GM12878 (cell line): ENCODE measurements at regions of chr16 and their contacts with region 1.

Region 1: DNA sequence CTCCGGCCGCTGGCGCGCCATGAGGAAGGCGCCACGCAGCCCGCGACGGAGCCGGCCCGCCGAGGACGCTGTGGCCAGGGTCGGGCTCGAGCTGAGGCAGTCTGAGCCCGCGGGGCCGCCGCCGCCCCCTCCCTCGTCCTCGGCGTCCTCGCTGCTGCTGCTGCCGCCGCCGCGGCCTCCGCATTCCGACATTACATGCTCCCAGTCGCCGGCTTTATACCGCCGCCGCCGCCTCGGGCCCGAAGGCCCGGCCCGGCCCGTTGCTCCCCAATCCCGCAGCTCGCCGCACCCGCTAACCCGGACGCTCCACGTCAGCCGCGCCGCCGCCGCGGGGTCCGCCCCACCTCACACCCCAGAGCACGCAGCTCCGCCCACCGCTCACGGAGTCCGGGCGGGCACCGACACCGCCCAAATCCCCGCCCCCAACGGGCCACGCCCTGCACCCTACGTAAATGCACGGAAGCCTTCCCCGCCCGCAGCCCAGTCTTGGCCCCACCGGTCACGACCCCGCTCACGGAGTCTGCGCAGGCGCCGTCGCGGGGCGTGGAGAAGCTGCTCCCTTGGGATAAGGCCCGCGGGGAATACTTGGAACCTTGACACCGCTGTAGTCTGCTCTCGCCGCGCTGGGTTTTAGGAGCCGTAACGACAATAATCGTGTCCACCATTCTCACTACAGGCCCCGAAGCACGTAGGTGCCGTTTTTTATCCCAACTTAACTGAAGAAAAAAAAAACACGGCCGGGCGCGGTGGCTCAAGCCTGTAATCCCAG is at the start of gene TXNDC11:
- DNase-seq: peak; percentile 93
- ATAC-seq: peak; percentile 88
- H3K4me3 ChIP-seq: peak within 1 kb of the TSS; percentile 83
- H3K27ac ChIP-seq: peak within 1 kb of the TSS; percentile 75
- H3K4me1 ChIP-seq: peaks cover 13% of the 10 kb centered on the region
- H3K27me3 ChIP-seq: no peaks in the 10 kb centered on the region
- CTCF ChIP-seq: no peak
- EP300 ChIP-seq: peak; percentile 18 to 38; a peak in 1 of 4 replicates
- POLR2A ChIP-seq: peak; percentile 98
- RAD21 ChIP-seq: no peak
- polyA plus RNA-seq, gene TXNDC11: 1.7 to 7.3 TPM

Region 2: GRCh38 chr16:11315510-11315909 is 427.2 kb before region 1 on chr16:
- CTCF ChIA-PET with region 1: no interaction called
- POLR2A ChIA-PET with region 1: no interaction called
- RAD21 ChIA-PET with region 1: no interaction called
- SMC1A ChIA-PET with region 1: no interaction called
- in situ Hi-C with region 1: no loop called
- intact Hi-C with region 1: no loop called
- DNase-seq: no peak
- ATAC-seq: no peak
- H3K4me3 ChIP-seq: no peak overlapping the region
- H3K27ac ChIP-seq: no peak overlapping the region
- H3K4me1 ChIP-seq: peaks cover 31% of the 10 kb centered on the region
- H3K27me3 ChIP-seq: no peaks in the 10 kb centered on the region; a peak in 1 of 4 replicates
- CTCF ChIP-seq: no peak
- EP300 ChIP-seq: no peak
- POLR2A ChIP-seq: no peak
- RAD21 ChIP-seq: no peak

Region 3: DNA sequence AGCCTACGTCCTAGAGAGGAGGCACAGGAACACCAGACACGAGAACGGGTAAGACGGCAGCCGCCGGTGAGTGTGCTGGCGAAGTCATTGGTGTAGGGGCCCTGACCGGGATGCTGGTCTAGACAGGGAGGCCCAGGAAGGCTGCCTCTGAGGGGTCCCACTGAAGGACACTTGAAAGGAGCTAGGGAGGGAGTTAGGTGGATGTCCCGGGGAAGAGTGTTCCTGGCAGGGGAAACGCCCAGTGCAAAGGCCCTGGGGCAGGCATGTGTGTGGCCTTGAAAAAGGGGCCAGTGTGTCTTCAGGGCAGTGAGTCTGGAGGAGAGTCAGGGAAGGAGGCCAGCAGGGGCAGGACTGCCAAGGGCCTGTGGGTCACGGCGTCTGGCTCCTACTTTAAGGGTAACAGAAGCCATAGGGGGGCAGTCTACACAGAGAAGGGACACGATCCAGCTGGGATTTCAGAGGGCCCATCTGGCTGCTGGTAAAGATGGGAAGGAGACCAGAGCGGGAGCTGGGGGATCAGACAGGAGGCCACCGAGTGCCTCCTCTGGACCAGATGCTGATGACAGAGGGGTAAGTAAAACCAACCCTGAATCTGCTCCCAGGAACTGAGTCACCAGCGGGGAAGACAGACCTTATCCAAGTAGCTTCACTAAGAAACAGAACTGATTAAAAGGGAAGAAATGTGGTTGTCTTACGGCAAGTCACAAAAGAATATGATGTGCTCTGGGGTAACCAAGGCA is 271.9 kb before region 1 on chr16:
- CTCF ChIA-PET with region 1: no interaction called
- POLR2A ChIA-PET with region 1: no interaction called
- RAD21 ChIA-PET with region 1: no interaction called
- SMC1A ChIA-PET with region 1: no interaction called
- in situ Hi-C with region 1: no loop called
- intact Hi-C with region 1: no loop called
- DNase-seq: no peak
- ATAC-seq: no peak
- H3K4me3 ChIP-seq: no peak overlapping the region
- H3K27ac ChIP-seq: no peak overlapping the region
- H3K4me1 ChIP-seq: no peaks in the 10 kb centered on the region
- H3K27me3 ChIP-seq: no peaks in the 10 kb centered on the region
- CTCF ChIP-seq: no peak
- EP300 ChIP-seq: no peak
- POLR2A ChIP-seq: no peak
- RAD21 ChIP-seq: no peak

Region 4: DNA sequence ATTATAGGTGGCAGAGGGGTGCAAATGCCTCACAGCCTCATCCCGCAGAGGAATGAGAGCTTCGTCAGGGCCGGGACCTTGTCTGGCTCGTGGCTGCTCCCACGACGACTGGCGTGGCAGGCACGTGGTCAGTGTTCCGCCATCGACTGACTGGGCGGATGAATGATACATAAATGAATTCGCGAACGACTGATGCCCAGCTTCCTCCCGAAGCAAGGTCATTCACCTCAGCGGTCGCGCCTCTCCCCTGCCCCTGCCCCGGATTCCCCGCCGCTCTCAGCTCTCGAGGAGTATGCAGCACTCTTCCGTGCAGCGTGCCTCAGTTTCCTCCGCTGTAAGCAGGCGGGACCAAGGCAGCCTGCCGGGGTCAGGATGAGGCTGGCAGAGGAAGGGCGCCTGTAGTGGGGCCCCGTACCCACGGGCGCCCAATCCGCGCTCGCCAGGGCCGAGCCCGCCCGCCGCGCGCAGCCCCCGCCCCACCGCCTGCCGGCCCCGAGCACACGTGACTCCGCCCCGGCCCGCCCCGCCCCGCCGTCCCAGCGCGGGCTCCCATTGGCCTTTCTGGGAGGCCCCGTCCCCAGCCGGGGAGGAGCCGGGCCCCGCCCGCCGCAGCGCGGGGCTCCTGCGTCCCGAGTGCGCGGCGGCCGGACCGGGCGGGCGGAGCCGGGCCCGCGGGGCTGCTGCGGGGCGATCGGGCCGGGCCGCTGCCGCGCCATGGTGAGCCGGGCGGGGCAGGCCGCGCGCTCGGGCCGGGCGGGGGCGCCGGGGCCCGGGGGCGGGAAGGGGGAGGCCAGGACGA is 74.7 kb before region 1 on chr16 and contains the start of gene SNN:
- CTCF ChIA-PET with region 1: interaction called, 3 read pairs
- POLR2A ChIA-PET with region 1: interaction called, 4 read pairs
- RAD21 ChIA-PET with region 1: interaction called, 8 read pairs
- SMC1A ChIA-PET with region 1: no interaction called
- in situ Hi-C with region 1: no loop called
- intact Hi-C with region 1: loop called (anchors 2 kb)
- DNase-seq: no peak
- ATAC-seq: peak; percentile 70
- H3K4me3 ChIP-seq: peak within 1 kb of the TSS; percentile 67
- H3K27ac ChIP-seq: peak within 1 kb of the TSS; percentile 88
- H3K4me1 ChIP-seq: peaks cover 45% of the 10 kb centered on the region
- H3K27me3 ChIP-seq: no peaks in the 10 kb centered on the region
- CTCF ChIP-seq: no peak
- EP300 ChIP-seq: no peak
- POLR2A ChIP-seq: peak; percentile 59; the same call in 1 of the 2 replicates
- RAD21 ChIP-seq: no peak
- polyA plus RNA-seq, gene SNN: 2.2 to 5.2 TPM

Region 5: DNA sequence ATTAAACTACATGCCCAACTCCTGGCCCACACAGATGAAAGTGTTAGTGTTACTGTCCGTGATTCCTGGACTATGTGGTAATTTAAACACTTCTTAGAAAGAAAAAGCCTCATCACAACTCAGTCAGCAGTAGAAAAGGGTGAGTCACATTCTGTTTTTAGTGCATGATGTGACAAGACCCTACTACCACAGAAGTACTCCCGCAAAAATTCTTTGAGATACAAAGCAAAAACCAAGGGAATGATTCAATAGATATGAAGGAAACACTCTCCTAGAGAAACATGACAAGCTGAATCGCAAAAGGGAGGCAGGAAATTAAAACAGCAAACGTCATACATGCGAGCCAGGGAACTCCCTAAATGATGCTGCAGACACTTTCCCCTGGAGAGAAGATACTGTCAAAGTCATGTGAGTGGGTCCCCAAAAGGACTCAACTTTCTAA is 60.0 kb before region 1 on chr16:
- CTCF ChIA-PET with region 1: interaction called, 3 read pairs
- POLR2A ChIA-PET with region 1: interaction called, 9 read pairs
- RAD21 ChIA-PET with region 1: interaction called, 11 read pairs
- SMC1A ChIA-PET with region 1: interaction called, 6 read pairs
- in situ Hi-C with region 1: no loop called
- intact Hi-C with region 1: no loop called
- DNase-seq: no peak
- ATAC-seq: peak; percentile 39
- H3K4me3 ChIP-seq: peak overlapping the region; percentile 0; the same call in 1 of the 2 replicates
- H3K27ac ChIP-seq: peak overlapping the region; percentile 67
- H3K4me1 ChIP-seq: peaks cover 83% of the 10 kb centered on the region
- H3K27me3 ChIP-seq: no peaks in the 10 kb centered on the region
- CTCF ChIP-seq: no peak
- EP300 ChIP-seq: no peak
- POLR2A ChIP-seq: no peak
- RAD21 ChIP-seq: no peak

Region 6: GRCh38 chr16:11757671-11758545 is 15.2 kb after region 1 on chr16:
- CTCF ChIA-PET with region 1: interaction called, 3 read pairs
- POLR2A ChIA-PET with region 1: interaction called, 7 read pairs
- RAD21 ChIA-PET with region 1: no interaction called
- SMC1A ChIA-PET with region 1: interaction called, 11 read pairs
- in situ Hi-C with region 1: no loop called
- intact Hi-C with region 1: no loop called
- DNase-seq: no peak
- ATAC-seq: no peak
- H3K4me3 ChIP-seq: no peak overlapping the region
- H3K27ac ChIP-seq: no peak overlapping the region
- H3K4me1 ChIP-seq: no peaks in the 10 kb centered on the region
- H3K27me3 ChIP-seq: no peaks in the 10 kb centered on the region
- CTCF ChIP-seq: no peak
- EP300 ChIP-seq: no peak
- POLR2A ChIP-seq: no peak
- RAD21 ChIP-seq: no peak

Region 7: DNA sequence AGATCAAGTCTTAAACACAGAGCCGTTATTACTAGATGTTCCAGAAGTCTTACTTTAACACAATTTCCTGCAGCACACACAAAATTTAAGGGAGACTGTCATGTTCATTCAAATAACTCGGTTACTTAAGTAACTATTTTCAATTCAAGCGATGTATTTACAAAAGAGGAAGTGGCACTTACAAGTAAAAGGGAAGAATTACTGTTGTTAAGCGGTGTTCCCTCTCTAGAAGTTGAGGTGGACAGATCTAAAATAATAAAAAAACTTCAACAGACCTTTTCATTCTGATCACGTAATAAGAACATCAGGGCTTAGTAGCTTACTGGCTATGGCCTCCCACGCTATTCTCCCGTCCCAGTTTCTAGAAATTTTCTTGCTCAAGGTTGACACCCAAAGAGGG is 26.1 kb after region 1 on chr16:
- CTCF ChIA-PET with region 1: interaction called, 13 read pairs
- POLR2A ChIA-PET with region 1: interaction called, 26 read pairs
- RAD21 ChIA-PET with region 1: interaction called, 5 read pairs
- SMC1A ChIA-PET with region 1: interaction called, 82 read pairs
- in situ Hi-C with region 1: no loop called
- intact Hi-C with region 1: no loop called
- DNase-seq: peak; percentile 58
- ATAC-seq: peak; percentile 80
- H3K4me3 ChIP-seq: peak overlapping the region; percentile 53
- H3K27ac ChIP-seq: peak overlapping the region; percentile 60
- H3K4me1 ChIP-seq: peaks cover 42% of the 10 kb centered on the region
- H3K27me3 ChIP-seq: no peaks in the 10 kb centered on the region
- CTCF ChIP-seq: no peak
- EP300 ChIP-seq: 0 out of 4 replicates have a peak, but pooled peaks of 1 of the 2 experiments have one; percentile 6
- POLR2A ChIP-seq: no peak
- RAD21 ChIP-seq: no peak

Region 8: GRCh38 chr16:11783319-11784037 is 40.8 kb after region 1 on chr16:
- CTCF ChIA-PET with region 1: interaction called, 6 read pairs
- POLR2A ChIA-PET with region 1: interaction called, 84 read pairs
- RAD21 ChIA-PET with region 1: interaction called, 32 read pairs
- SMC1A ChIA-PET with region 1: interaction called, 82 read pairs
- in situ Hi-C with region 1: no loop called
- intact Hi-C with region 1: loop called (anchors 5 kb)
- DNase-seq: peak; percentile 89
- ATAC-seq: peak; percentile 71
- H3K4me3 ChIP-seq: peak overlapping the region; percentile 67
- H3K27ac ChIP-seq: peak overlapping the region; percentile 99
- H3K4me1 ChIP-seq: peaks cover 34% of the 10 kb centered on the region
- H3K27me3 ChIP-seq: no peaks in the 10 kb centered on the region
- CTCF ChIP-seq: no peak
- EP300 ChIP-seq: peak; percentile 88 to 90
- POLR2A ChIP-seq: peak; percentile 61
- RAD21 ChIP-seq: no peak